ENCODE measurements at regions of chr5 and their contacts with region 1.

Region 1: DNA sequence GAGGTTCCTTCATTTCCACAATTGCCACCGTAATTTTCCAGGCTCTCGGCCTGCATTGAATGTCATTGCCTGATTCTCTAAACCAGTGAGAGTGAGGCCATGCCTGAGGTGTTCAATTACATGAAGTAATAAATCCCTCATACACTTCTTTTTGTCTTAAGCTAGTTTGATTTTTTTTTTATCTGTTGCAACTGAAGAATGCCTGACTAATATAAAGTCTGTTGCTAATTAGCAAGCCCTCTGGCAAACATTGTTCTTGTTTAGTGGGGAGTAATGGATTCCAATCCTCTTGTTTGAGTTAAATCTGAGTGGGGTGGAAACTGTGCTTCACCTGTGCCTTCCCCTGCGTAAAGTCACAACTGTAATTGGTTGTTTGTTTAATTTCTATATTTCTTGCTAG is 338.1 kb upstream of the ATP10B start:
- DNase-seq: no peak
- H3K4me3 ChIP-seq: no peak overlapping the region
- H3K27ac ChIP-seq: no peak overlapping the region
- H3K4me1 ChIP-seq: no peaks in the 10 kb centered on the region
- H3K27me3 ChIP-seq: no peaks in the 10 kb centered on the region
- CTCF ChIP-seq: no peak

Region 2: GRCh38 chr5:160353379-160353778 is 836.7 kb before region 1 on chr5:
- CTCF ChIA-PET with region 1: no interaction called
- POLR2A ChIA-PET with region 1: interaction called, 16 read pairs
- intact Hi-C with region 1: no loop called
- DNase-seq: no peak
- H3K4me3 ChIP-seq: no peak overlapping the region
- H3K27ac ChIP-seq: no peak overlapping the region
- H3K4me1 ChIP-seq: no peaks in the 10 kb centered on the region
- H3K27me3 ChIP-seq: no peaks in the 10 kb centered on the region
- CTCF ChIP-seq: no peak

Measured in A673 (cell line).